Naive thymus-derived CD4-positive, alpha-beta T cell (primary cell): ENCODE measurements at regions of chr7 and their contacts with region 1.

Region 1: DNA sequence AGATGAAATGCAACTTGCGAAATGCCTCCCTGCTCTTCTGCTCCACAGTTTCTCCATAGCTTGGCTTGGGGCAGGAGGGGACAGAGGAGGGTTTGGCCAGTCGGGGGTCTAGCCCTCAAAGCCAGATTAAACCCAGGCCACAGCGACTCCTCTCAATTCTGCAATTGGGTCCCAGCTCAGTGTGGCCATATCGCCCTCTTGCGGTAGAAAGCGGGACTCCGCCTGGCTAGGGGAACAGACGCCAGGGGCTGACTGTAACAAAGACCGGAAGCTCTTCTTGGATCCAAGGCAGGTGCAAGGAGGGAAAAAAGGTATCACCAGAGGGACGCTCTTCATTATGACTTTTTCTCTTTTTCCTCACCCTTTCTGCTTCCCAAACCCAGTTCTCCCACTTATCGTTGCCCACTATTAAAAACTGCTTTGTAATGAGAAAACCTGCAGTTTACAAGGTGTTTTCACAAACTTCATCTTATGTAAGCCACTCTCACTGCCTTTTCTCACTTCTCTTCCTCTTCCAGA is 36.6 kb upstream of the TNPO3 start:
- DNase-seq: peak; percentile 69 to 91 (median 79)
- ATAC-seq: peak; percentile 94
- H3K4me3 ChIP-seq: no peak overlapping the region
- H3K4me3 Mint-ChIP-seq: peak overlapping the region in 1 of 10 donors; percentile 49
- H3K27ac ChIP-seq: no peak overlapping the region
- H3K27ac Mint-ChIP-seq: peak overlapping the region in 5 of 9 donors; percentile 34 to 86 (median 46)
- H3K4me1 ChIP-seq: peaks cover 0 to 16% of the 10 kb centered on the region in 2 donors
- H3K4me1 Mint-ChIP-seq: peaks cover 14 to 35% (median 26%) of the 10 kb centered on the region in 7 donors
- H3K27me3 ChIP-seq: no peaks in the 10 kb centered on the region
- H3K27me3 Mint-ChIP-seq: no peaks in the 10 kb centered on the region

Region 2: DNA sequence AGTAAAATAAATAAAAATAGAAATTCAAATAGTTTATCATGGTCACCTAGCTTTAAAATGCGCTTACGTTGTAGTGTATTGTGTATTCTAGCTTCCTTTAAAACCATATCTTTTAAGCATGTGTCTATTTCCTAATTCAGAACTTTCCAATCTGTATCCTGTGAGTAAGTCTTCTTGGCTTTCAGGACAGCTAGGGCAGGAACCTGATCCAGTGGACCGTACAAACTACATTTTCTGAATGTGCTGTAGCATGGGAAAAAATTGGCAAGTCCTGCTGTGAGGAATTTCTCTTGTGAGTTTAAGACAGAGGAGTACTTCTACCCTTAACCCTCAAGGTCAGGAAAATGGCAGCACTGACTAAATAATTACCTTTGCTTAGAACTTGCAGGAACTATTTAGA is 328.0 kb before region 1 on chr7:
- CTCF ChIA-PET with region 1: no interaction called
- POLR2A ChIA-PET with region 1: no interaction called
- intact Hi-C with region 1: no loop called
- DNase-seq: no peak
- ATAC-seq: no peak
- H3K4me3 ChIP-seq: no peak overlapping the region
- H3K4me3 Mint-ChIP-seq: no peak overlapping the region
- H3K27ac ChIP-seq: no peak overlapping the region
- H3K27ac Mint-ChIP-seq: no peak overlapping the region
- H3K4me1 ChIP-seq: no peaks in the 10 kb centered on the region
- H3K4me1 Mint-ChIP-seq: no peaks in the 10 kb centered on the region
- H3K27me3 ChIP-seq: no peaks in the 10 kb centered on the region
- H3K27me3 Mint-ChIP-seq: no peaks in the 10 kb centered on the region

Region 3: DNA sequence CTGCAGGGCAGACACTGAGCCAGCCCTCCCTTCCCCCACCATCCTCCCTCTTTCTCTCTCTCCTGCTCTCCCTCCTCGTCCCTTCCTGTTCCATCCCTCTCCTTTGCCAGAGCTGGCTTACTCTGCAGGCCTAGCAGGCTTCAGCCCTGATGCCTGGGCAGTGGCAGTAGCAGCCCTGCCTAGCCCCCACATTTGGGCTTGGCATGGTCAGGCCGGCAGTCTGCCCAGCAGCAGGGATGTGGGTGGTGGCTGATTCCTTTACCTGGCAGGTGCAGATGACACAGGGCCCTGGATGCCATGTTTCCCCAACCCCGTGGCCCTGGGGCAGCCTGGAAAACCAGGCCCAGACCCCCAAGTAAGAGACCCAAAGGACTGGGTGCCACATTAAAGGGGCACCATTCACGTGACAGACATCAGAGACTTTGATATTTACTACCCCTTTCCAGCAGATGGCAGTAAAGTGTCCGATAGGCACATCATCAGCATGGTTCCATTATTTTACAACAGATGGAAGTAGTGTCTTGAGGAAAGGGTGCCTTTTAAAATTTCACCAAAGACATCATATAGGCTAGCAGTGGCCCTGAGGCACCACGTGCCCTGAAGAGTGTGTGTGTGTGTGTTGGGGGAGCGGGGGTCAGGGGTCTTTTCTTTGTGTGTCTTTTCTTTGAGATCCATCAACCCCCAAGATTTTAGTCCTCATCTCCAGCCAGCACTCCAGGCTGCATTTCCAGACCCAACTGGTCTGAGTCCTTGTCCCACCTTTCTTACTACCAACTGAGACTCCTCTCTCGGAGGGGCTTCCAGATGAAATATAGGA is 187.0 kb before region 1 on chr7:
- CTCF ChIA-PET with region 1: interaction called, 7 read pairs
- POLR2A ChIA-PET with region 1: no interaction called
- intact Hi-C with region 1: loop called in 1 of 2 experiments (anchors 1 kb)
- DNase-seq: peak in 7 of 9 donors; percentile 33 to 68 (median 57)
- ATAC-seq: peak; percentile 86
- H3K4me3 ChIP-seq: no peak overlapping the region
- H3K4me3 Mint-ChIP-seq: no peak overlapping the region
- H3K27ac ChIP-seq: no peak overlapping the region
- H3K27ac Mint-ChIP-seq: peak overlapping the region in 1 of 9 donors; percentile 41
- H3K4me1 ChIP-seq: no peaks in the 10 kb centered on the region
- H3K4me1 Mint-ChIP-seq: peaks cover 0 to 8% (median 0%) of the 10 kb centered on the region in 7 donors
- H3K27me3 ChIP-seq: no peaks in the 10 kb centered on the region
- H3K27me3 Mint-ChIP-seq: peaks cover 25 to 45% (median 30%) of the 10 kb centered on the region in 5 donors

Region 4: GRCh38 chr7:129010075-129010474 is 81.5 kb before region 1 on chr7:
- CTCF ChIA-PET with region 1: interaction called, 8 read pairs
- POLR2A ChIA-PET with region 1: no interaction called
- intact Hi-C with region 1: loop called (anchors 5 to 10 kb)
- DNase-seq: no peak
- ATAC-seq: no peak
- H3K4me3 ChIP-seq: no peak overlapping the region
- H3K4me3 Mint-ChIP-seq: no peak overlapping the region
- H3K27ac ChIP-seq: no peak overlapping the region
- H3K27ac Mint-ChIP-seq: peak overlapping the region in 1 of 9 donors; percentile 14
- H3K4me1 ChIP-seq: no peaks in the 10 kb centered on the region
- H3K4me1 Mint-ChIP-seq: peaks cover 11 to 25% (median 20%) of the 10 kb centered on the region in 7 donors
- H3K27me3 ChIP-seq: no peaks in the 10 kb centered on the region
- H3K27me3 Mint-ChIP-seq: no peaks in the 10 kb centered on the region

Region 5: GRCh38 chr7:129054438-129055293 is 36.9 kb before region 1 on chr7 and contains the start of gene TNPO3:
- CTCF ChIA-PET with region 1: interaction called, 3 read pairs
- POLR2A ChIA-PET with region 1: no interaction called
- intact Hi-C with region 1: loop called (anchors 1 to 2 kb)
- DNase-seq: peak; percentile 76 to 90 (median 85)
- ATAC-seq: peak; percentile 92
- H3K4me3 ChIP-seq: peak within 1 kb of the TSS; percentile 96
- H3K4me3 Mint-ChIP-seq: peak within 1 kb of the TSS; percentile 91 to 99 (median 99)
- H3K27ac ChIP-seq: peak within 1 kb of the TSS; percentile 92
- H3K27ac Mint-ChIP-seq: peak within 1 kb of the TSS; percentile 96 to 100 (median 99)
- H3K4me1 ChIP-seq: peaks cover 15 to 18% of the 10 kb centered on the region in 2 donors
- H3K4me1 Mint-ChIP-seq: peaks cover 17 to 51% (median 39%) of the 10 kb centered on the region in 7 donors
- H3K27me3 ChIP-seq: peaks cover 0 to 3% of the 10 kb centered on the region in 2 donors
- H3K27me3 Mint-ChIP-seq: peaks cover 4 to 13% (median 4%) of the 10 kb centered on the region in 5 donors
- total RNA-seq, gene TNPO3: 28.6 to 40.6 (median 39.6) TPM

Region 6: GRCh38 chr7:129144095-129144833 is 52.7 kb after region 1 on chr7 and contains the start of gene TSPAN33:
- CTCF ChIA-PET with region 1: interaction called, 6 read pairs
- POLR2A ChIA-PET with region 1: no interaction called
- intact Hi-C with region 1: loop called in 1 of 2 experiments (anchors 2 kb)
- DNase-seq: peak; percentile 43 to 79 (median 53)
- ATAC-seq: peak; percentile 93
- H3K4me3 ChIP-seq: peak within 1 kb of the TSS; percentile 93
- H3K4me3 Mint-ChIP-seq: peak within 1 kb of the TSS; percentile 90 to 97 (median 94)
- H3K27ac ChIP-seq: peak within 1 kb of the TSS; percentile 58
- H3K27ac Mint-ChIP-seq: peak within 1 kb of the TSS in 8 of 9 donors; percentile 7 to 84 (median 73)
- H3K4me1 ChIP-seq: peaks cover 4 to 10% of the 10 kb centered on the region in 2 donors
- H3K4me1 Mint-ChIP-seq: peaks cover 12 to 36% (median 28%) of the 10 kb centered on the region in 7 donors
- H3K27me3 ChIP-seq: peaks cover 0 to 5% of the 10 kb centered on the region in 2 donors
- H3K27me3 Mint-ChIP-seq: peaks cover 0 to 66% (median 5%) of the 10 kb centered on the region in 5 donors
- total RNA-seq, gene TSPAN33: 1.8 to 14.8 (median 3.6) TPM

Region 7: GRCh38 chr7:129502376-129502776 is 410.8 kb after region 1 on chr7 and contains the start of gene SMKR1:
- CTCF ChIA-PET with region 1: no interaction called
- POLR2A ChIA-PET with region 1: no interaction called
- intact Hi-C with region 1: no loop called
- DNase-seq: peak; percentile 86 to 94 (median 91)
- ATAC-seq: peak; percentile 98
- H3K4me3 ChIP-seq: peak within 1 kb of the TSS; percentile 64
- H3K4me3 Mint-ChIP-seq: peak within 1 kb of the TSS; percentile 75 to 91 (median 86)
- H3K27ac ChIP-seq: peak within 1 kb of the TSS; percentile 70
- H3K27ac Mint-ChIP-seq: peak within 1 kb of the TSS; percentile 70 to 93 (median 83)
- H3K4me1 ChIP-seq: peaks cover 4 to 7% of the 10 kb centered on the region in 2 donors
- H3K4me1 Mint-ChIP-seq: peaks cover 14 to 22% (median 16%) of the 10 kb centered on the region in 7 donors
- H3K27me3 ChIP-seq: no peaks in the 10 kb centered on the region
- H3K27me3 Mint-ChIP-seq: peaks cover 0 to 23% (median 0%) of the 10 kb centered on the region in 5 donors
- total RNA-seq, gene SMKR1: 1.1 to 2.5 (median 1.4) TPM